ENCODE measurements at regions of chr14 and their contacts with region 1.

Region 1: DNA sequence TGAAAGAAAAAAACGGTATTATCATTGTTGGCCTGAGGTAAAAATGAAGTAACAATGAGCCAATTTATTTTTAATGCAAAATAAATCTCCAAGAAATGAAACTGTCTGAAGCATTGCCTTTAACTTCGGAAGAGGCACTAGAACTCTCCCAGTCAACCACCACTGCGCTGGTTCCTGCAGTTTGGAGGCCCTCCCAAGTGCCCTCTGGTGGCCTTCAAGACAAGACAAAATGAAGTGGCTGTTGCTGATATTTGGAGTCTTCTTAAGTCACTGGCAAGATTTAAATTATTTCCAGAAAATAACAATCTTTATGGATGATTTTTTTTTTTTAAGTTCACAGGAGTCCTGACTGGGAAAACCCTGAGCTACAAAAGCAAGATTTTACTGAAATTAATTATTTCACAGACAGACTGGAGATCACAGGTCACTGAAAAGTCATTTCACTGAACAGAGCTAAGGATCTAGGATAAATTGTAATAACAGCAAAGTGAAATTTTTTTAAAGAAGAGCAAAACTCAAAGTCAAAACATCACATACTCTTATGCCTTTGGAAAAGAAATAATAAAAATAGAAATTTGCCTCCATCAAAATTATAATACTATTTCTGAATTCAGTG is 58.2 kb downstream of the DICER1 start:
- DNase-seq: peak; percentile 77
- H3K4me3 Mint-ChIP-seq: no peak overlapping the region
- H3K27ac Mint-ChIP-seq: no peak overlapping the region
- H3K4me1 Mint-ChIP-seq: peaks cover 12% of the 10 kb centered on the region
- H3K27me3 Mint-ChIP-seq: no peaks in the 10 kb centered on the region
- CTCF ChIP-seq: peak; percentile 60

Region 2: DNA sequence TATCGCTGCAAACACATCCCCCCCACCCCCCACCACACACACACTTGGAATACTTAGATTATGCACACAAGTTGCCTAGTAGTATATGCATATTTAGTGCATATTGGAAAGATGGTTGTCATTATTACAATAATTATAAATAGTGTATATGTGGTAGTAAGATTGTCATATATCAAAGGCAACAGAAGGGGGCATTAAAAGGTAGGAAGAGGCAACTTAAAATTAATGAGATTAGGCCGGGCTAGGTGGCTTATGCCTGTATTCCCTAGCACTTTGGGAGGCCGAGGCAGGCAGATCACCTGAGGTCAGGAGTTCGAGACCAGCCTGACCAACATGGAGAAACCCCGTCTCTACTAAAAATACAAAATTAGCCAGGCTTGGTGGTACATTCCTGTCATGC is 381.3 kb before region 1 on chr14:
- CTCF ChIA-PET with region 1: interaction called, 3 read pairs
- POLR2A ChIA-PET with region 1: no interaction called
- intact Hi-C with region 1: loop called (anchors 1 kb)
- DNase-seq: peak; percentile 14
- H3K4me3 Mint-ChIP-seq: no peak overlapping the region
- H3K27ac Mint-ChIP-seq: no peak overlapping the region
- H3K4me1 Mint-ChIP-seq: no peaks in the 10 kb centered on the region
- H3K27me3 Mint-ChIP-seq: peaks cover 14% of the 10 kb centered on the region
- CTCF ChIP-seq: peak; percentile 23

Region 3: DNA sequence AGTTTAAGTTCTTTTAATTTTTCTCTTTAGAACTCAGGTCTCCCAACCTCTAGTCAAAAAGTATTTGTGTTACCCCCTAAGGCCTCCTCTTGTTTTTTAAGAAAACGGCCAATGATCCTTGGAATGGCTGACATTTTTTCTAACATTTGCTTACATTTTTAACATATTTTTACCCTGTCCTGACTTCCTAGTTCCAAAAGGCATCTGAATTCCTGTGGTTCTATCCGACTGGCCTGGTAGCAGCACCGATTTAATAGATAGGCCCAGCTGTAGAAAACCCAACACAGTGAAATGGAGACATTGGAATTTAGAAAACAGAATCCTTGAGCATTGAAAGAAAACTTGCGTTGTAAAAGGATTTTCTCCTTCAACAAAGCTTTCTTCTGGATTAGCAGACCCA is 194.5 kb before region 1 on chr14:
- CTCF ChIA-PET with region 1: interaction called, 5 read pairs
- POLR2A ChIA-PET with region 1: interaction called, 3 read pairs
- intact Hi-C with region 1: loop called (anchors 1 kb)
- DNase-seq: no peak
- H3K4me3 Mint-ChIP-seq: no peak overlapping the region
- H3K27ac Mint-ChIP-seq: no peak overlapping the region
- H3K4me1 Mint-ChIP-seq: no peaks in the 10 kb centered on the region
- H3K27me3 Mint-ChIP-seq: peaks cover 22% of the 10 kb centered on the region
- CTCF ChIP-seq: no peak

Region 4: DNA sequence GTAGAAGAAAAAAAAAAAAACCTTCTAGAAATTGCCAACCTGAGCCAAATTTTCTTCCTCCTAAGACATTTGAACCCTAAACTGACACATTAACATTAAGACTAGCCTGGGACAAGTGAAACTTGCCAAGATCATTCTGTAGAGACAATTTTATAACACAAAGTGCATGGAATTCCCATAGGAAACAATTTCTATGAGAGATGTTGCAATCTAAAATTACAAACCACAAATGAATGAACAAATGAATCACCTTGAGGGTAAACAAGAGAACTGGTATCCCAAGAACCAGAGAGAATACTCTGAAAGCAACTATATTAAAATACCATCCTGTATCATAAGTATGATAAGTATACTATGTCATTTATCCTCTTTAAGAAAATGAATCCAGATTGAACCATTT is 107.0 kb before region 1 on chr14:
- CTCF ChIA-PET with region 1: no interaction called
- POLR2A ChIA-PET with region 1: no interaction called
- intact Hi-C with region 1: loop called (anchors 5 kb)
- DNase-seq: peak; percentile 84
- H3K4me3 Mint-ChIP-seq: no peak overlapping the region
- H3K27ac Mint-ChIP-seq: peak overlapping the region; percentile 82
- H3K4me1 Mint-ChIP-seq: peaks cover 11% of the 10 kb centered on the region
- H3K27me3 Mint-ChIP-seq: peaks cover 27% of the 10 kb centered on the region
- CTCF ChIP-seq: no peak

Region 5: DNA sequence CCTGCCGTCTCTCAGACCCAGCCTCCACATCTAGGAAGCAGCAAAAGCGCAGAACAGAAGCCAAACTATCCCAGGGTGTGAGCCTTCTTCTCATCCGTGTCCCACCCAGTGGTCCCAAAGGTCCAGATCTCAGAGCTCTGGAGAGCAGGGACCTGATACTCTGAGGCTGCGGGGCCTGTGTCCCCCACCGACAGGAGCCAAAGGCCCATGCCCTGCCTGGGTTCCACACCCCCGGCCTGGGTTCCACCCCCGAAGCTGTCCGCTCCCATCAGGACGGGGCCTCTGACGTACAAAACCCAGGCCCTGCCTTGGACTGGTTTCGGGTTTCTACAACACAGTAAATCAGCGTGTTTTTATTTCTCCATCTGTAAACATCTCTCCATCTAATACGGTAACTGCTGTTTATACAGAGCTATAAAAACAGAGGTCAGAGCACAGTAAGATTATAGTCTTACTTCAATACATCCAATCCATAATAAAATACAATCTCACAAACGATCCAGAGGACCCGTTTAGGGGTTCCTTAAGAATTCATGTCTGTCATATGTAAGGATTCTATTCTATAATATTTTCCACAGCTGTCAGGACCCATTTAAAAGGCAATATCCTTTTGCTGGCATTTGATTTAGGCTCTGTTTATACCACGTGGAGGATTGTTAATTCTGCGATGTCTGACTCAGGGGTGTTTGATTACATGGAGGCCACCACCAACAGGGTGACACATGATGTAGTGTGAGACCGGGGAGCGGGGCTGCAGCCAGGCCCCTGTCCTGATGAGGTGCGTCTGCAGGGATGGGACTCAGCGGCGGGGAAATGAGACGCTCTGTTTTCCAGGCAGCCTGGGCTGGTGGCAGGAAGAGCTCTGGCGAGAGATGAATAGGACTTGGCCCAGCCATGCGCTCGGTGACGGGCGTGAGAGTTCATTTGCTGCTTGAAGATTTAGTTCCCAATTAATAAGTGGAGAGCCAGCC is 52.1 kb before region 1 on chr14:
- CTCF ChIA-PET with region 1: no interaction called
- POLR2A ChIA-PET with region 1: no interaction called
- intact Hi-C with region 1: no loop called
- DNase-seq: no peak
- H3K4me3 Mint-ChIP-seq: no peak overlapping the region
- H3K27ac Mint-ChIP-seq: no peak overlapping the region
- H3K4me1 Mint-ChIP-seq: no peaks in the 10 kb centered on the region
- H3K27me3 Mint-ChIP-seq: peaks cover 46% of the 10 kb centered on the region
- CTCF ChIP-seq: no peak

Region 6: DNA sequence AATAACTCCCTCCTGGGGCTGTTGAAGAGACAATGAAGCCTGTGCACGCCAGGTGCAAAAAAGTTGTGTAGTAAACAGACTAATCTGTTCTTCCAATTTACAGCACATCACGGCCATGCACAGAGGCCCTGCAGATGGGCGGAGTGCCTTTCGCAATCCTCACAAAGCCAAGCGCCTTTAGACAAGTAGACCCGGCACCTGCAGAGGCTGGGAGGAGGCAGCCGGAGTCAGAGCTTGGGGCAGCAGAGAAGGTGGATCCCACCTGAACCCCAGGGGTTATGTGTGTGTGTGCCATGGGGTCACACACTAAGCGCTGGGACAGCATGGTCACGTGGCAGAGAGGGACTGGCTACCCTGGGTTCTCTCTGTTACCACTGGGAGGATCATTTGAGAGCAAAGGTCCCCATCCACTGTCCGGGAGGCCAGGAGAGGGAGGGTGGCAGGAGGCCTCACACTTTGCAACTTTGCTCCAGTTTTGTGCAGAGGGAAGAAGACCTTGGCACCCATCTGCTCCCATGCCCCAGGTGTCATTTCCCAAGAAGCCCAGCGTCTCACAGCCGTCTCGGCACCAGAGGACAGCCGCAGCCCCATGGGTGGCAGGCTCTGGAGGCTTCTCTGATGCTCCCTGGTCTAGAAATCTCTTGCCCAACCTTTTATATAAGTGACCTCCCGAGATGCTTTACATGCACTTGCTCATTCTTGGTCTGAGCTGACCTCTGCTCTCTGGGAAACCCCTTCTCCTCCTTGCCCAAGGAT is 138.2 kb after region 1 on chr14:
- CTCF ChIA-PET with region 1: no interaction called
- POLR2A ChIA-PET with region 1: no interaction called
- intact Hi-C with region 1: no loop called
- DNase-seq: peak; percentile 23
- H3K4me3 Mint-ChIP-seq: no peak overlapping the region
- H3K27ac Mint-ChIP-seq: no peak overlapping the region
- H3K4me1 Mint-ChIP-seq: peaks cover 8% of the 10 kb centered on the region
- H3K27me3 Mint-ChIP-seq: no peaks in the 10 kb centered on the region
- CTCF ChIP-seq: no peak

Region 7: GRCh38 chr14:95431199-95432143 is 332.4 kb after region 1 on chr14:
- CTCF ChIA-PET with region 1: interaction called, 7 read pairs
- POLR2A ChIA-PET with region 1: no interaction called
- intact Hi-C with region 1: loop called (anchors 1 kb)
- DNase-seq: peak; percentile 48
- H3K4me3 Mint-ChIP-seq: no peak overlapping the region
- H3K27ac Mint-ChIP-seq: peak overlapping the region; percentile 63
- H3K4me1 Mint-ChIP-seq: peaks cover 6% of the 10 kb centered on the region
- H3K27me3 Mint-ChIP-seq: no peaks in the 10 kb centered on the region
- CTCF ChIP-seq: peak; percentile 46